ENCODE measurements at regions of chr9 and their contacts with region 1.

Region 1: GRCh38 chr9:96441798-96442445 is 8.0 kb upstream of the HABP4 start:
- DNase-seq: no peak
- ATAC-seq: peak; percentile 85
- H3K4me3 ChIP-seq: no peak overlapping the region
- H3K27ac ChIP-seq: no peak overlapping the region
- H3K4me1 ChIP-seq: no peaks in the 10 kb centered on the region
- H3K27me3 ChIP-seq: no peaks in the 10 kb centered on the region
- CTCF ChIP-seq: peak; percentile 68 to 72 (median 71)
- EP300 ChIP-seq: no peak
- POLR2A ChIP-seq: no peak
- RAD21 ChIP-seq: peak; percentile 84

Region 2: GRCh38 chr9:96667361-96667728 is 225.4 kb after region 1 on chr9:
- CTCF ChIA-PET with region 1: interaction called, 42 read pairs
- POLR2A ChIA-PET with region 1: no interaction called
- RAD21 ChIA-PET with region 1: interaction called, 19 read pairs
- SMC1A ChIA-PET with region 1: interaction called, 29 read pairs
- in situ Hi-C with region 1: no loop called
- intact Hi-C with region 1: loop called (anchors 1 kb)
- DNase-seq: no peak
- ATAC-seq: no peak; the same call in 2 of the 3 replicates
- H3K4me3 ChIP-seq: no peak overlapping the region
- H3K27ac ChIP-seq: no peak overlapping the region
- H3K4me1 ChIP-seq: no peaks in the 10 kb centered on the region
- H3K27me3 ChIP-seq: no peaks in the 10 kb centered on the region
- CTCF ChIP-seq: no peak
- EP300 ChIP-seq: no peak
- POLR2A ChIP-seq: no peak
- RAD21 ChIP-seq: no peak

Region 3: GRCh38 chr9:97062417-97062985 is 620.6 kb after region 1 on chr9:
- CTCF ChIA-PET with region 1: no interaction called
- POLR2A ChIA-PET with region 1: no interaction called
- RAD21 ChIA-PET with region 1: no interaction called
- SMC1A ChIA-PET with region 1: no interaction called
- in situ Hi-C with region 1: no loop called
- intact Hi-C with region 1: no loop called
- DNase-seq: peak; percentile 9
- ATAC-seq: peak; percentile 89
- H3K4me3 ChIP-seq: no peak overlapping the region
- H3K27ac ChIP-seq: no peak overlapping the region
- H3K4me1 ChIP-seq: no peaks in the 10 kb centered on the region
- H3K27me3 ChIP-seq: no peaks in the 10 kb centered on the region
- CTCF ChIP-seq: no peak
- EP300 ChIP-seq: peak in 1 of 2 experiments; percentile 43; a peak in 1 of 4 replicates
- POLR2A ChIP-seq: no peak
- RAD21 ChIP-seq: no peak